ENCODE measurements at regions of chr2 and their contacts with region 1.

Region 1: GRCh38 chr2:86562922-86563649 is at the start of gene CHMP3:
- DNase-seq: peak; percentile 97
- ATAC-seq: peak; percentile 91
- H3K4me3 Mint-ChIP-seq: peak within 1 kb of the TSS; percentile 95
- H3K27ac Mint-ChIP-seq: peak within 1 kb of the TSS; percentile 99
- H3K4me1 Mint-ChIP-seq: peaks cover 34% of the 10 kb centered on the region
- H3K27me3 Mint-ChIP-seq: no peaks in the 10 kb centered on the region
- total RNA-seq, gene CHMP3: 38.4 to 39.9 TPM

Region 2: DNA sequence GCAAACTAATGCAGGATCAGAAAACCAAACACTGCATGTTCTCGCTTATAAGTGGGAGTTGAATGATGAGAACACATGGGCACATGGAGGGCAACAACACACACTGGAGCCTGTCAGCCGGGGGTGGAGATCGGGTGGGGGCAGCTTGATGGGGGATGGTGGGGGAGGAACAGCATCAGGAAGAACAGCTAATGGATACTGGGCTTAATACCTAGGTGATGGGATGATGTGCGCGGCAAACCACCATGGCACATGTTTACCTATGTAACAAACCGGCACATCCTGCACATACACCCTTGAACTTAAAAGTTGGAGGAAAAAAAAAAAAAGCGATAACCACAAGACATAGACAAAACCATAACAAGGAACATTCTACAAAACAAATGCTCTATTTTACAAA is 10.2 kb before region 1 on chr2:
- CTCF ChIA-PET with region 1: interaction called, 4 read pairs
- POLR2A ChIA-PET with region 1: interaction called, 13 read pairs
- DNase-seq: peak; percentile 44
- ATAC-seq: peak; percentile 70
- H3K4me3 Mint-ChIP-seq: peak overlapping the region; percentile 49
- H3K27ac Mint-ChIP-seq: peak overlapping the region; percentile 78
- H3K4me1 Mint-ChIP-seq: peaks cover 18% of the 10 kb centered on the region
- H3K27me3 Mint-ChIP-seq: no peaks in the 10 kb centered on the region

Region 3: DNA sequence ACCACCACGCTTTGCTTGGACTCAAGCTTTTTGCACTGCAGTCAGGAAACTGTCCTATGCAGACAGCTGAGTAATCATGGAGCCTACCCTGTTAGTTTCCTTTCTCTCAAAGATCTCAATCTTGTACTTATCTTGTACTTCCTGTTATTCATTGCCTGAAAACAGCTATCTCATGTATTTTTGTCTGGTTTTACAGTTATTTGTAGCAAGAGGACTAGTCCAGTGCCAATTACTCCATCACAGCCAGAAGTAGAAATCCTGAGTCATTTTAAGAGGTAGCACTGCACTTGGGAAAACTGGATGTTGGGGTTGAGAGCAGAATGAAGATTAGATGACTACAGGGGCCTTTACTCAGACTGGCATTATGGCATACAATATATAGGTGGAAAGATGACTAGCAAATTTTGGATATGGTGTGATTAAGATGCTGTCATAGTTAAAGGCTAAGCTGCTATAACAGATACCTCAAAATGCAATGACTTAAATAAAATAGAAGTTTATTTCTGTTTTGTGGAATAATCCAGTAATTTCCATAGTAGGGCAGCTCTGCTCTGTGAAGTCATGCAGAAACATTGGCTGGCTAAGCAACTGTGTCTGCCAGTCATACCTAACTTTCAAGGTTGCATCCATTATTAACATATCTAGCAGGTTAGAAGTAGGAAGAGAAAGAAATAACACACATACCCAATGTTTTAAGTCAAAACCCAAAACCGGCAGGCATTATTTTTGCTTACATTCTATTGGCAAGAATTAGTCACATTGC is 21.2 kb after region 1 on chr2:
- CTCF ChIA-PET with region 1: interaction called, 3 read pairs
- POLR2A ChIA-PET with region 1: interaction called, 16 read pairs
- DNase-seq: no peak
- ATAC-seq: peak; percentile 67
- H3K4me3 Mint-ChIP-seq: no peak overlapping the region
- H3K27ac Mint-ChIP-seq: peak overlapping the region; percentile 80
- H3K4me1 Mint-ChIP-seq: peaks cover 7% of the 10 kb centered on the region
- H3K27me3 Mint-ChIP-seq: peaks cover 4% of the 10 kb centered on the region

Region 4: GRCh38 chr2:86610871-86611270 is 47.8 kb after region 1 on chr2:
- CTCF ChIA-PET with region 1: no interaction called
- POLR2A ChIA-PET with region 1: no interaction called
- DNase-seq: no peak
- ATAC-seq: no peak
- H3K4me3 Mint-ChIP-seq: no peak overlapping the region
- H3K27ac Mint-ChIP-seq: no peak overlapping the region
- H3K4me1 Mint-ChIP-seq: peaks cover 15% of the 10 kb centered on the region
- H3K27me3 Mint-ChIP-seq: no peaks in the 10 kb centered on the region

Measured in activated CD8-positive, alpha-beta T cell treated with anti-CD3 and anti-CD28 coated beads, Interleukin-2, amount 10 ng/mL, durations not matched to agents 7 days and 5 days (primary cell).